ENCODE measurements at regions of chr5 and their contacts with region 1.

Region 1: GRCh38 chr5:127813633-127814587 is 110.7 kb downstream of the CCDC192 start:
- DNase-seq: peak; percentile 83
- H3K4me3 ChIP-seq: no peak overlapping the region
- H3K27ac ChIP-seq: peak overlapping the region; percentile 76
- H3K4me1 ChIP-seq: peaks cover 23% of the 10 kb centered on the region
- H3K27me3 ChIP-seq: no peaks in the 10 kb centered on the region
- CTCF ChIP-seq: no peak
- POLR2A ChIP-seq: no peak

Region 2: GRCh38 chr5:127757576-127757975 is 56.3 kb before region 1 on chr5:
- CTCF ChIA-PET with region 1: interaction called, 5 read pairs
- POLR2A ChIA-PET with region 1: no interaction called
- dilution Hi-C with region 1: no loop called
- intact Hi-C with region 1: loop called (anchors 5 kb)
- DNase-seq: peak; percentile 83
- H3K4me3 ChIP-seq: no peak overlapping the region
- H3K27ac ChIP-seq: no peak overlapping the region
- H3K4me1 ChIP-seq: peaks cover 4% of the 10 kb centered on the region
- H3K27me3 ChIP-seq: no peaks in the 10 kb centered on the region
- CTCF ChIP-seq: peak; percentile 33 to 37
- POLR2A ChIP-seq: no peak

Region 3: GRCh38 chr5:127801751-127802476 is 12.0 kb before region 1 on chr5:
- CTCF ChIA-PET with region 1: interaction called, 7 read pairs
- POLR2A ChIA-PET with region 1: no interaction called
- dilution Hi-C with region 1: no loop called
- intact Hi-C with region 1: loop called (anchors 1 kb)
- DNase-seq: peak; percentile 71
- H3K4me3 ChIP-seq: no peak overlapping the region
- H3K27ac ChIP-seq: peak overlapping the region; percentile 75
- H3K4me1 ChIP-seq: peaks cover 17% of the 10 kb centered on the region
- H3K27me3 ChIP-seq: no peaks in the 10 kb centered on the region
- CTCF ChIP-seq: no peak
- POLR2A ChIP-seq: no peak

Region 4: DNA sequence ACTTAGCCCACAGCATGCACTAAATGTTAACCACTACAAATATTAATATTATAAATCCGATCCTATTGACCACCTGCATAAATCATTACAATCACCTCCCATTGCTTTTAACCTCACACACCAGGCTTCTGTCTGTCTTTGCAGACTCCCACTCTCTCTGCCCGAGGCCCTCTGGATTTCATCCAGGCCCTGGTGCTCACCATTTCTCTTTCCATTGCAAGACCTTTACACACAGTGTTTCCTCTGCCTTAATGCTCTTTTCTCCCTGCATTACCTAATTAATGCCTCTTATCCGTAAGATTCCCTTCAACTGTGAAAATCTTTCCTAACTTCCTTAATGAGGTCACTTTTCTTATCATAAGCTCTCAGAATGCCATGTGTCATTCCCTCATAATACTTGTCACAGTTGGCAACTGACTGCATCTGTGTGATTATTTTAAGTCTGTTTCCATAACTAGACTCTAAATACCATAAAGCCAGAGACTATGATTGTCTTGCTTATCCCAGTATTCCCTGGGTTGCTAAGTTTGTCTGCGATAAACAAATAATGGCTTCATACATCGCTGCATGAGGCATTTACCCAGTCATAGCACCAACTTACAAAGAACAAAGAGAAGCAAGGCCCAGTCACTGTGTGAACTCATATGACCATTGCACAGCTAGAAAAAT is 44.3 kb after region 1 on chr5:
- CTCF ChIA-PET with region 1: interaction called, 4 read pairs
- POLR2A ChIA-PET with region 1: no interaction called
- dilution Hi-C with region 1: no loop called
- intact Hi-C with region 1: loop called (anchors 1 kb)
- DNase-seq: peak; percentile 89
- H3K4me3 ChIP-seq: no peak overlapping the region
- H3K27ac ChIP-seq: peak overlapping the region; percentile 84
- H3K4me1 ChIP-seq: peaks cover 27% of the 10 kb centered on the region
- H3K27me3 ChIP-seq: no peaks in the 10 kb centered on the region
- CTCF ChIP-seq: no peak
- POLR2A ChIP-seq: no peak

Region 5: DNA sequence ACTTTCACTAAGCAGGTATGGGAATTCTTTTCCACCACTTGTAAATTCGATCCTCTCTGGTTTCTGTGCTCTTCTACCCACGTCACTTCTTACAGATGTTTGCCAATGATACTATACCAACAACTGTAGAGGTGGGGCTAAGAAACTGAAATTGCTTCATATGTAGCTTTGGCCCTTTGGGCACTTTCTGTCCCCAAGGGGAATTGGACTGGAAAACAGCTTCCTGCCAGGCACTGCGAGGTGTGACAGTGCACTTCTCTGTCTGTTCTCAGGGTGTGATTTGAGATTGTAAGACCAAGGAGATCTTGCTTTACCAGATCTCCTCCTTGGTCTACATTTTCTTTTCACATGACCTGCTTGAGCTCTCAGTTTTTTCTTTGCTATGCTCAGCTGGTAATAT is 53.5 kb after region 1 on chr5:
- CTCF ChIA-PET with region 1: interaction called, 5 read pairs
- POLR2A ChIA-PET with region 1: no interaction called
- dilution Hi-C with region 1: no loop called
- intact Hi-C with region 1: loop called (anchors 1 kb)
- DNase-seq: no peak
- H3K4me3 ChIP-seq: no peak overlapping the region
- H3K27ac ChIP-seq: no peak overlapping the region
- H3K4me1 ChIP-seq: peaks cover 36% of the 10 kb centered on the region
- H3K27me3 ChIP-seq: peaks cover 0 to 7% of the 10 kb centered on the region in 2 experiments
- CTCF ChIP-seq: no peak
- POLR2A ChIP-seq: no peak

Region 6: DNA sequence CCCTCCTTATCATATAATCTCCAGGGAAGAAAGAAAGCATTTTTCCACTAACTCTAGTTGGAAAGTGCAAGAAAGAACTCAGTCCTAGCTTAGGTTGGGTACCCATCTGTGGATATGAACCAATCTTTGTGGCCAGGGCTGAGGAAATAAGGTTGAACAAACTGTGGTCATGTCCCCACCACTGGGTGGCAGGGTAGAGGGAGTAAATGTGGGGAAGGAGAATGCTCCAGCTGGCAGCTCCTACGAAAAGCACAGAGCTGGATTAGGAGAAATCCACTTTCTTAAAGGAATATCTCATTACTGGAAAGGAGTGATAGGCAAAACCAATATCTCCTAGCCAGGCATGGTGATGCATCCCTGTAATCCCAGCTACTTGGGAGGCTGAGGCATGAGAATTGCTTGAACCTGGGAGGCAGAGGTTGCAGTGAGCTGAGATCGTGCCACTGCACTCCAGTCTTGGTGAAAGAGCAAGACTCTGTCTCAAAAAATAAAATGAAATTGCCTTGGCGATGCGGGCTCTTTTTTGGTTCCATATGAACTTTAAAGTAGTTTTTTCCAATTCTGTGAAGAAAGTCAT is 64.4 kb after region 1 on chr5:
- CTCF ChIA-PET with region 1: no interaction called
- POLR2A ChIA-PET with region 1: no interaction called
- dilution Hi-C with region 1: no loop called
- intact Hi-C with region 1: no loop called
- DNase-seq: peak; percentile 71
- H3K4me3 ChIP-seq: no peak overlapping the region
- H3K27ac ChIP-seq: no peak overlapping the region
- H3K4me1 ChIP-seq: peaks cover 5% of the 10 kb centered on the region
- H3K27me3 ChIP-seq: no peaks in the 10 kb centered on the region
- CTCF ChIP-seq: peak; percentile 65 to 66
- POLR2A ChIP-seq: no peak

Measured in endothelial cell of umbilical vein (primary cell).